BJ (cell line): ENCODE measurements at regions of chr11 and their contacts with region 1.

Region 1: DNA sequence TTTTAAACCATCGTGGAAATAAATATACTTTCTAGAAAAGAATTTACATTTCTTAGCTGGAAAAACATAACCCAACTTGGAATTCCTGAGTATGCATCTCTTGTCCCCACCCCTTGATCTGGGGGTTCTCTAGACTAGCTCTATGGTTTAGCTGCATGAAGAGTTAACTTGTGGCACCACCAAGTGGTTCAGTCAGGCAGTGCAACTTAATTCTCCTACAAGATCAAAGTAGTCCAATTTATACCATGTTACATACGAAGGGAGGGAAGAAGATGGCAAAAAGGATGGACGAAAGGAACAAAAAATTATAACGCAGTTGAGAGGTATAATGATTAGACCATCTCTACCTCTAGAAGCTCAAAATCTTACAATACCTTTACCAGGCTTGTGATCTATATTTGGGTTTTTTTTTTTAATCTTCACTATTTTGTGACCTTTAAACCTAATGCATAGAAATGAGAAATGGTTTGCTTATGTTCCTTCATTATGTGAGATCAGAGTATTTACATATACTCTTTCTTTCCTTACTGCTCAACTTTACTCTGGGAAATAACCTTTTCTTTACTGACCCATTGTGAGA is 28.5 kb upstream of the ALKBH3 start:
- DNase-seq: no peak
- H3K4me3 ChIP-seq: no peak overlapping the region
- H3K27me3 ChIP-seq: no peaks in the 10 kb centered on the region
- CTCF ChIP-seq: peak; percentile 80

Region 2: GRCh38 chr11:43576803-43577521 is 275.2 kb before region 1 on chr11:
- CTCF ChIA-PET with region 1: interaction called, 22 read pairs
- POLR2A ChIA-PET with region 1: no interaction called
- DNase-seq: no peak
- H3K4me3 ChIP-seq: no peak overlapping the region
- H3K27me3 ChIP-seq: peaks cover 52% of the 10 kb centered on the region
- CTCF ChIP-seq: peak; percentile 57

Region 3: GRCh38 chr11:43825217-43825816 is 26.8 kb before region 1 on chr11:
- CTCF ChIA-PET with region 1: interaction called, 53 read pairs
- POLR2A ChIA-PET with region 1: no interaction called
- DNase-seq: no peak
- H3K4me3 ChIP-seq: no peak overlapping the region
- H3K27me3 ChIP-seq: no peaks in the 10 kb centered on the region
- CTCF ChIP-seq: peak; percentile 78

Region 4: DNA sequence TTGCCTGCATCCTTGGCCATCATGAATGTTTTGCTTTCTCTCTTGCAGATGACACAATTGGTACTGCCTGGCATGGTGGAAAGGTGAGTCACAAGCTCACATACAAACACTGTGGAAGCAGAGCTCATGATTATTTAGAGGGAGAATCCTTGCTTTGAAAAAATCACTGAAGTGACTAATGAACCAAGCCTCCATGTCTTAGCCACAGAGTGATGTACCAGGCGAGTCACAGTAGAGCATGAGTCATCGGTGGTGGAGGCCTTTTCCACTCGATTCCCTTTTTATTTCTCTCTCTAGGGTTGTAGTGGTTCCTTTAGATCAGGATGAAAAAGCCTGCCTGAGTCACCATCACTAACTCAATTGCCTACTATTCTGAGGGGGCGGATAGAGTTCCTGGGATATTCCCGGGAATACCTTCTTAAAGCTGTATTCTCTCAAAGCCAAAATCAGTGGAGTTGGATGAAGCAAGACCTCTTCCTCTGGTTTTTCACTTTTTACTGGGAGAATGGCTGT is 21.2 kb before region 1 on chr11:
- CTCF ChIA-PET with region 1: interaction called, 53 read pairs
- POLR2A ChIA-PET with region 1: no interaction called
- DNase-seq: peak; percentile 99
- H3K4me3 ChIP-seq: no peak overlapping the region
- H3K27me3 ChIP-seq: no peaks in the 10 kb centered on the region
- CTCF ChIP-seq: no peak

Region 5: DNA sequence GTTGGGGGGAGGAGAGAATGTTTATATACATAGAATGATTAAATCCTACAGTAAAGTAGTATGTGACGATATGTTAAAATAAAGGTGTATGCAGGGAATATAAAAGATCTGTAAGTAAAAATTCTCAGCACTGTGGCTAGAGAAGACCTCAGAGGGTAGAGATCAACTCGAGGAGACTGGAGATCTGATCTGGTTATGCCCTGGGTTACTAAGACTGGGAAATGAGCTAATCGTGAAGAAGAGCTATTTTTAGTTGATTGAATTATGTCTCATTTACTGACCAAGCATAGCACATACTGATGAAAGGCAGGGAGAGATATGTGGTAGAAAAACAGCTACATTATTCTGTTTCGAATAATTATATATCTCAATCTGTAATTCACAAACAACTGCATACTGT is 14.3 kb before region 1 on chr11:
- CTCF ChIA-PET with region 1: interaction called, 43 read pairs
- POLR2A ChIA-PET with region 1: no interaction called
- DNase-seq: no peak
- H3K4me3 ChIP-seq: no peak overlapping the region
- H3K27me3 ChIP-seq: no peaks in the 10 kb centered on the region
- CTCF ChIP-seq: no peak